Right cardiac atrium (tissue), 5 donors: ENCODE measurements at regions of chr18 and their contacts with region 1.

Region 1: DNA sequence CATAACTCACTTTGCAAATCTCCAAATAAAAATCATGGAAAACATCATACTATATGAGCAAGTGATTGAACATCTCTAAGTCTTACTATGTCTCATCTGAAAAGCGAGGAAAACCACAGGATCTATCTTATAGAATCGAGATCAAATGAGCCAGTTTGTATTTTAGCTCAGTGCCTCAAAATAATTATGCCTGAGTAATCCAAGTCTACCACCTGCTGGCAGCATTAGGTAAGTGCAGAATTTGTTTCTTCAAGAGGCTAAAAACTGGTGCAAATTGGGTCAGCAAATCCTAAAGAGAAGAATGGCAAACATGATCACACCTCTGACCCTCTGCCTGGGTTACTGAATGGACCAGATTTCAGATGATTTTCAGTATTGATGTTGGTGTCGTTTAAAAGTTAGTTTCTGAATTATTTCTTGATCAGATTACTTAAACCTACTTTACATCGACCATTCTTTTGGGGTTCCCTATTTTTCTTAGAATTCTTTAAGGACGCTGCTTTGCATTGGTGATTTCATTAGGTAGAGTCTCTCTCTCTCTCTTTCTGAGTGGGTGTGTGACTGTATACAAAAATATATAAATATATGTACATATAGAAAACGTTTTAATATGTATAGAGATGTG is 12.7 kb upstream of the FHOD3 start:
- DNase-seq: no peak
- ATAC-seq: peak in 1 of 2 donors; percentile 40
- H3K4me3 ChIP-seq: no peak overlapping the region
- H3K27ac ChIP-seq: no peak overlapping the region
- H3K4me1 ChIP-seq: no peaks in the 10 kb centered on the region
- H3K27me3 ChIP-seq: no peaks in the 10 kb centered on the region

Region 2: DNA sequence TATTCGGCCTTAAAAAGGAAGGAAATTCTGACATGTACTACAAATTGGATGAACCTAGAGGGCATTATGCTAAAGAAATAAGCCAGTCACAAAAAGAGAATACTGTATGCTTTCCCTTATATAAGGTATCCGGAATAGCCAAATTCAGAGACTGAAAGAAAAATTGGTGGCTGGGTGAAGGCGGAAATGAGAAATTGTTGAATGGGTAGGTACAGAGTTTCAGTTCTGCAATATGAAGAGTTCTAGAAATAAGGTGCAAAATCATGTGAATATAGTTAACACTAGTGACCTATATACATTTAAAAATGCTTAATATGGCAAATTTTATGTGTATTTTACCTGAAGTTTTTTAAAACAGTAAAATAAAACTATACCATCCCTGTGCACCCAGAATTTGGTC is 269.2 kb before region 1 on chr18:
- intact Hi-C with region 1: loop called in 3 of 4 experiments (anchors 5 to 10 kb)
- DNase-seq: no peak
- ATAC-seq: no peak
- H3K4me3 ChIP-seq: no peak overlapping the region
- H3K27ac ChIP-seq: no peak overlapping the region
- H3K4me1 ChIP-seq: no peaks in the 10 kb centered on the region
- H3K27me3 ChIP-seq: no peaks in the 10 kb centered on the region

Region 3: GRCh38 chr18:36095936-36096519 is 188.8 kb before region 1 on chr18:
- intact Hi-C with region 1: loop called (anchors 2 to 5 kb)
- DNase-seq: no peak
- ATAC-seq: no peak
- H3K4me3 ChIP-seq: no peak overlapping the region
- H3K27ac ChIP-seq: no peak overlapping the region
- H3K4me1 ChIP-seq: no peaks in the 10 kb centered on the region
- H3K27me3 ChIP-seq: no peaks in the 10 kb centered on the region

Region 4: GRCh38 chr18:36101943-36102342 is 182.8 kb before region 1 on chr18:
- intact Hi-C with region 1: loop called in 3 of 4 experiments (anchors 2 to 5 kb)
- DNase-seq: no peak
- ATAC-seq: no peak
- H3K4me3 ChIP-seq: no peak overlapping the region
- H3K27ac ChIP-seq: no peak overlapping the region
- H3K4me1 ChIP-seq: no peaks in the 10 kb centered on the region
- H3K27me3 ChIP-seq: no peaks in the 10 kb centered on the region

Region 5: GRCh38 chr18:36195427-36196122 is 89.2 kb before region 1 on chr18:
- intact Hi-C with region 1: loop called in 1 of 4 experiments (anchors 5 kb)
- DNase-seq: no peak
- ATAC-seq: peak; percentile 79 to 92
- H3K4me3 ChIP-seq: no peak overlapping the region
- H3K27ac ChIP-seq: no peak overlapping the region
- H3K4me1 ChIP-seq: no peaks in the 10 kb centered on the region
- H3K27me3 ChIP-seq: no peaks in the 10 kb centered on the region